Activated T-helper 1 cell treated with anti-CD3 and anti-CD28 coated beads, Interleukin-12 subunit alpha, Interleukin-12 subunit beta, Interleukin-2, Interleukin-4 antibody, amounts not matched to agents 30 ng/mL and 10 ng/mL and 1 ng/mL, durations not matched to agents 14 hours and 24 hours and 36 hours (primary cell): ENCODE measurements at regions of chr6 and their contacts with region 1.

Region 1: GRCh38 chr6:32666420-32667300 is at the start of gene HLA-DQB1:
- DNase-seq: peak; percentile 57
- H3K4me3 Mint-ChIP-seq: peak within 1 kb of the TSS; percentile 87
- H3K27ac Mint-ChIP-seq: peak within 1 kb of the TSS; percentile 72
- H3K4me1 Mint-ChIP-seq: peaks cover 45% of the 10 kb centered on the region
- H3K27me3 Mint-ChIP-seq: peaks cover 32% of the 10 kb centered on the region
- total RNA-seq, gene HLA-DQB1: 4.3 and 4.7 TPM in 2 replicates

Region 2: DNA sequence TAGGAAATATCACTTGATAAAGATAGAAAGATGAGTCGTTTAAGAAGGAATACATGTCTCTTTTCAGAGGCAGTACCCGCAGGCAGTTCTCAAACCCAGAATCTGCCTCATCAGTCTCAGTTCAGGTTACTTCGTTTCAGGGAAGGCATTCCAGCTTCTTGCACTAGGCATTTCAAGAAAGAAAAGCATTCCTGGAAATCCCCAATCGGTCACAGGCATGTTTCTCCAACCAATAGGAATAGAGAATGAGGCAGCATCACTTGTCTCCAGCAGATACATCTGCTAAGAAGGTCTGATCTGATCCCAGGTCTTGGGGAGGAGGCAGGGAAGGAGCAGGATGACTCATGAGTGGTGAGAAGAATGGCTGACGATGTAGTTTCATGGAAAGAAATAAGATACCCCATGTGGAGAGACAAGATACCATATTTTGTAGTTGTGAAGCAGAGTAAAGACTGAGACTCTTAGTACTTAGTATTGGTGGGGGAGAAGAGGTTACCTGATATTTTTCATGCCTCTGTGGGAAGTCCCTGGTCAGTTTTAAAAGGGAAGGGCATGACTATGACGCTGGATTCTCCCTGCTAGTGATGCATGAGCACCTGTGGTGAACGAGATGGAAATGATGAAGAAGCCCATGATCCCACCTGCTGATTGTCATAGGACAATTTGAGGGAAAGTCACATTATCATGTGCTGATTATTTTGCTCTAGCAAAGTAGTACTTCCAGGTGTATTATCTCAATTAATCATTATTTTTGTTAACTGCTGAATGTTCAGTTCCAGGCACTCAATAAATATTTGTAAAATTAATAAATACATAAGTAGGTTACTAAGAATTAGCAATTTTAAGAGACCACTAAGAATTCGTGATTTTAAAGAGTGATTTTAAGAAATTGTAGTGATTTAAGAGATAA is 56.7 kb before region 1 on chr6:
- intact Hi-C with region 1: loop called (anchors 2 kb)
- DNase-seq: peak; percentile 62
- H3K4me3 Mint-ChIP-seq: no peak overlapping the region
- H3K27ac Mint-ChIP-seq: no peak overlapping the region
- H3K4me1 Mint-ChIP-seq: peaks cover 15% of the 10 kb centered on the region
- H3K27me3 Mint-ChIP-seq: no peaks in the 10 kb centered on the region

Region 3: GRCh38 chr6:32685603-32686002 is 18.9 kb after region 1 on chr6:
- intact Hi-C with region 1: loop called (anchors 1 kb)
- DNase-seq: peak; percentile 47
- H3K4me3 Mint-ChIP-seq: peak overlapping the region; percentile 66
- H3K27ac Mint-ChIP-seq: peak overlapping the region; percentile 77
- H3K4me1 Mint-ChIP-seq: peaks cover 46% of the 10 kb centered on the region
- H3K27me3 Mint-ChIP-seq: peaks cover 11% of the 10 kb centered on the region

Region 4: GRCh38 chr6:32774426-32774825 is 107.8 kb after region 1 on chr6:
- intact Hi-C with region 1: no loop called
- DNase-seq: no peak
- H3K4me3 Mint-ChIP-seq: no peak overlapping the region
- H3K27ac Mint-ChIP-seq: no peak overlapping the region
- H3K4me1 Mint-ChIP-seq: no peaks in the 10 kb centered on the region
- H3K27me3 Mint-ChIP-seq: peaks cover 45% of the 10 kb centered on the region